Activated T-helper 2 cell treated with anti-CD3 and anti-CD28 coated beads, Interferon-gamma antibody, Interleukin-2, Interleukin-4, amounts not matched to agents 10 μg/mL and 5 μg/mL and 100 μg/mL, durations not matched to agents 14 hours and 24 hours and 36 hours (primary cell): ENCODE measurements at regions of chr11 and their contacts with region 1.

Region 1: DNA sequence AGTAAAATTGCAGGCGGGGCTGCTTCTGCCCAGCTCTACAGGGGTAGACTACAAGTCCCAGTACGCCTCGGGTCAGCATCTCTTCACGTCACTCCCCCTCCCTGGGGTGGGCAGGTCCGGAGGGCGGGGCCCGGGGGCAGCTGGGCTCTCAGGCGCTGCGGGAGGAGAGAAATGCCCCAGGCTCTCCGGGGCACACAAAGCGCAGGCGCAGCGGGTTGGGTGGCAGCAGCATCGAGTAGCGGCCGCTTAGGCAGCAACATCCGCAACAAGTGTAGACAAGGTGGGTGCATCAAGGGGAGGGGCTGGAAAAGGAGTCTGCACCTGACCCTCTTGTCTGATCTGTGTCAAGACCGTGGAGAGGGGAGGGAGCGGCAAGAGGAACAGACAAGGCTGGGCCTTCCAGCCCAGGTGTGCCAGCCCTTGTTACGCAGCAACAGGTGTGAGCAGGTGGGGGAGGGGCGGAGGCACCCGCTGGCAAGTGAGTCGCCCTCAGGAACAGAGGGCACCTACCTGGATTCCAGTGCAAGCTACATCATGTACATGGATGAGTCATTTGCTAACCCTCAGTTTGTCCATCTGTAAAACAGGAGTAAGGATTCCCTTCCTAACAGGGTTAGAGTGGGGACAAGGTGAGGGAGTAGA is 1.2 kb downstream of the PLEKHB1 start:
- DNase-seq: peak; percentile 81
- H3K4me3 Mint-ChIP-seq: peak overlapping the region; percentile 69
- H3K27ac Mint-ChIP-seq: no peak overlapping the region
- H3K4me1 Mint-ChIP-seq: peaks cover 10% of the 10 kb centered on the region
- H3K27me3 Mint-ChIP-seq: peaks cover 3% of the 10 kb centered on the region

Region 2: GRCh38 chr11:73597956-73598718 is 49.4 kb before region 1 on chr11 and contains the start of gene FAM168A:
- intact Hi-C with region 1: loop called (anchors 1 kb)
- DNase-seq: peak; percentile 89
- H3K4me3 Mint-ChIP-seq: peak within 1 kb of the TSS; percentile 95
- H3K27ac Mint-ChIP-seq: peak within 1 kb of the TSS; percentile 89
- H3K4me1 Mint-ChIP-seq: peaks cover 29% of the 10 kb centered on the region
- H3K27me3 Mint-ChIP-seq: no peaks in the 10 kb centered on the region
- total RNA-seq, gene FAM168A: 19.2 and 19.3 TPM in 2 replicates

Region 3: DNA sequence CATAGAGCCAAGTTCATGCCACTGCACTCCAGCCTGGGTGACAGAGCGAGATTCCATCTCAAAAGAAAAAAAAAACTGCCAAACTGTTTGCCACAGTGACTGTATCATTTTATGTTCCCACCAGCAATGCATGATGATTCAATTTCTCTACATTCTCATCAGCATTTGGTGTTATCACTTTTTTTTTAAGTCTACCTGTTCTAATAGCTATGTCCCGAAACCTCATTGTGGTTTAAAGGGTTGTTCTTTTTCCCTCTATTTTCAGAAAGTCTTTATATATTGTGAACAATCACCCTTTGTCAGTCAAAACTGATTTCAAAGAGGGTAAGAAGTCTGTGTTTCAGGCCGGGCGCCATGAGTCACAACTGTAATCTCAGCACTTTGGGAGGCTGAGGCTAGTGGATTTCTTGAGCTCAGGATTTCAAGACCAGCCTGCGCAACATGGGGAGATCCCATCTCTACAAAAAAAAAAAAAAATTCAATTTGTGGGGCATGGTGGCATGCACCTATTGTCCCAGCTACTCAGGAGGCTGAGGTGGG is 34.9 kb before region 1 on chr11:
- intact Hi-C with region 1: no loop called
- DNase-seq: no peak
- H3K4me3 Mint-ChIP-seq: no peak overlapping the region
- H3K27ac Mint-ChIP-seq: no peak overlapping the region
- H3K4me1 Mint-ChIP-seq: no peaks in the 10 kb centered on the region
- H3K27me3 Mint-ChIP-seq: peaks cover 12% of the 10 kb centered on the region

Region 4: GRCh38 chr11:73752216-73752867 is 104.8 kb after region 1 on chr11:
- intact Hi-C with region 1: no loop called
- DNase-seq: no peak
- H3K4me3 Mint-ChIP-seq: no peak overlapping the region
- H3K27ac Mint-ChIP-seq: no peak overlapping the region
- H3K4me1 Mint-ChIP-seq: peaks cover 21% of the 10 kb centered on the region
- H3K27me3 Mint-ChIP-seq: no peaks in the 10 kb centered on the region

Region 5: DNA sequence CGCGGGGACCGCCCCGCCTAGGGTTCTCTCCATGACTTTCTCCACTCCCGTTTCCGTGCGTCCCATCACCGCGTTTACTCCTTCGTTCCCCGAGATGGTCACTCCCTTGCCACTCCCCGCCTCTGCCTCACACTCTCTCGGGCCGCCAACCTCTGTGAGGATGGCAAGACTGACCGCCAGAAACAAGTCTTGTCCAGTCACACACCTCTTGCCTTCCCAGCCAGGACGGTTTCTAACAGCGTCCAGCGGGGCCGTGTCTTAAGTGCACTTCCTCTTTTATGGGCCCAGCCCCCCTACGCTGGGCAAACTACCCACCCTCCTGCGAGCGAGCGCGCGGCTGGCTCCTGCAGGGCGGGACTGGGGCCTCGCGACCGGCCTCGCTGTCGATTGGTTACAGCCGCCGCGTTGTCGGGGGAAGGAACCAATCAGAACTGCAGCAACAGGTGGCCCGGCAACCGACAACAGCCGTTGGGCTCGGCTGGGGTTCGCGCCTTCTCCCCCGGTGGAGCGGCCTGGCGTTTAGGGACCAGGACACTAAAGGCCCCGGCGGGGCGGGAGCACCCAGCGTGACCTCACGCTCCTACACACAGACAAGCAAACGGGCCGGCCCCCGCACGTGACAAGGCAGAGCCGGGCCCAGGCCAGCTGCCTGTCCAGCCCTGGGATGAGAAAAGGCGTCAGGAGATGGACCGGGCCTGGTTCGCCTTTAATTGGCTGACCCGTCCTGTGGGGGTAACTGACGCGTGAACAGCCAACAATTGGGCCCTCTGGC is 335.6 kb after region 1 on chr11:
- intact Hi-C with region 1: no loop called
- DNase-seq: peak; percentile 94
- H3K4me3 Mint-ChIP-seq: peak overlapping the region; percentile 100
- H3K27ac Mint-ChIP-seq: peak overlapping the region; percentile 97
- H3K4me1 Mint-ChIP-seq: peaks cover 39% of the 10 kb centered on the region
- H3K27me3 Mint-ChIP-seq: no peaks in the 10 kb centered on the region